K562 (cell line): ENCODE measurements at regions of chr3 and their contacts with region 1.

Region 1: GRCh38 chr3:44761424-44762169 is at the starts of genes KIAA1143 and KIF15:
- DNase-seq: peak; percentile 93 to 100 (median 96)
- ATAC-seq: peak; percentile 97
- H3K4me3 ChIP-seq: peak within 1 kb of the TSS; percentile 83
- H3K27ac ChIP-seq: peak within 1 kb of the TSS; percentile 85
- H3K4me1 ChIP-seq: peaks cover 0 to 4% of the 10 kb centered on the region in 2 experiments; a peak in 3 of 5 replicates
- H3K27me3 ChIP-seq: no peaks in the 10 kb centered on the region
- CTCF ChIP-seq: peak in 1 of 3 experiments; percentile 44; a peak in 2 of 6 replicates
- EP300 ChIP-seq: peak; percentile 56
- POLR2A ChIP-seq: peak; percentile 95
- RAD21 ChIP-seq: no peak
- polyA plus RNA-seq, gene KIAA1143: 33.5 to 42.2 TPM
- polyA plus RNA-seq, gene KIF15: 9.0 to 21.2 TPM

Region 2: DNA sequence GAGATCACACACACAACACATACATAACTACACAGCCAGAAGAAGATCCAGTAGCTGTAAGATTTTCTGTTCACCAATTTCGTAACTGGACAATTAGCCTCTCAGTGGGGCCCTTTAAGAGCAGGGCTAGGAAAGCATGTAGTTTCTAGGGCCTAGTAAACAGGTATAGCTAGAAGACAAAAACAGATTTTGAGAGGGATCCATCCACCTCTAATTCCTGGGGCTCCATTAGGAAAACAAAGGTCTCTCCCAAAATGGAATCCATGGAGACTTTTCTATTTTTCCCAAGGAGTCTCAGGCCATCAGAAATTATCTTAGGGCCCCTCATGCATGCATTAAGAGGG is 10.5 kb after region 1 on chr3:
- CTCF ChIA-PET with region 1: no interaction called
- POLR2A ChIA-PET with region 1: interaction called, 13 read pairs
- in situ Hi-C with region 1: no loop called
- intact Hi-C with region 1: no loop called
- DNase-seq: peak in 1 of 4 experiments; percentile 26
- ATAC-seq: no peak
- H3K4me3 ChIP-seq: no peak overlapping the region
- H3K27ac ChIP-seq: no peak overlapping the region
- H3K4me1 ChIP-seq: no peaks in the 10 kb centered on the region
- H3K27me3 ChIP-seq: no peaks in the 10 kb centered on the region
- CTCF ChIP-seq: no peak
- EP300 ChIP-seq: no peak
- POLR2A ChIP-seq: no peak
- RAD21 ChIP-seq: no peak

Region 3: GRCh38 chr3:44782891-44783290 is 21.3 kb after region 1 on chr3:
- CTCF ChIA-PET with region 1: no interaction called
- POLR2A ChIA-PET with region 1: interaction called, 11 read pairs
- in situ Hi-C with region 1: no loop called
- intact Hi-C with region 1: no loop called
- DNase-seq: no peak
- ATAC-seq: no peak
- H3K4me3 ChIP-seq: no peak overlapping the region
- H3K27ac ChIP-seq: no peak overlapping the region
- H3K4me1 ChIP-seq: no peaks in the 10 kb centered on the region
- H3K27me3 ChIP-seq: no peaks in the 10 kb centered on the region
- CTCF ChIP-seq: no peak
- EP300 ChIP-seq: no peak
- POLR2A ChIP-seq: no peak
- RAD21 ChIP-seq: no peak

Region 4: GRCh38 chr3:44976002-44976815 is 214.6 kb after region 1 on chr3 and contains the starts of genes EXOSC7 and ZDHHC3:
- CTCF ChIA-PET with region 1: no interaction called
- POLR2A ChIA-PET with region 1: interaction called, 5 read pairs
- in situ Hi-C with region 1: no loop called
- intact Hi-C with region 1: loop called (anchors 5 kb)
- DNase-seq: peak; percentile 94 to 98 (median 96)
- ATAC-seq: peak; percentile 80
- H3K4me3 ChIP-seq: peak within 1 kb of the TSS; percentile 94
- H3K27ac ChIP-seq: peak within 1 kb of the TSS; percentile 91
- H3K4me1 ChIP-seq: peaks cover 14 to 41% of the 10 kb centered on the region in 2 experiments
- H3K27me3 ChIP-seq: no peaks in the 10 kb centered on the region
- CTCF ChIP-seq: no peak
- EP300 ChIP-seq: no peak
- POLR2A ChIP-seq: peak; percentile 92
- RAD21 ChIP-seq: no peak
- polyA plus RNA-seq, gene EXOSC7: 236 to 237 TPM
- polyA plus RNA-seq, gene ZDHHC3: 10.3 to 11.5 TPM